Caco-2 (cell line): ENCODE measurements at regions of chr2 and their contacts with region 1.

Region 1: GRCh38 chr2:205424336-205424735 is 258.0 kb upstream of the NRP2 start:
- DNase-seq: peak; percentile 62 to 66
- H3K4me3 ChIP-seq: no peak overlapping the region
- H3K4me3 Mint-ChIP-seq: peak overlapping the region; percentile 25
- H3K27ac Mint-ChIP-seq: peak overlapping the region; percentile 84
- H3K4me1 ChIP-seq: peaks cover 35% of the 10 kb centered on the region
- H3K4me1 Mint-ChIP-seq: peaks cover 35% of the 10 kb centered on the region
- H3K27me3 ChIP-seq: no peaks in the 10 kb centered on the region
- H3K27me3 Mint-ChIP-seq: no peaks in the 10 kb centered on the region
- CTCF ChIP-seq: no peak

Region 2: GRCh38 chr2:205237524-205237923 is 186.8 kb before region 1 on chr2:
- CTCF ChIA-PET with region 1: no interaction called
- POLR2A ChIA-PET with region 1: no interaction called
- intact Hi-C with region 1: no loop called
- DNase-seq: no peak
- H3K4me3 ChIP-seq: no peak overlapping the region
- H3K4me3 Mint-ChIP-seq: no peak overlapping the region
- H3K27ac Mint-ChIP-seq: no peak overlapping the region
- H3K4me1 ChIP-seq: no peaks in the 10 kb centered on the region; the same call in 1 of the 2 replicates
- H3K4me1 Mint-ChIP-seq: peaks cover 12% of the 10 kb centered on the region
- H3K27me3 ChIP-seq: no peaks in the 10 kb centered on the region
- H3K27me3 Mint-ChIP-seq: no peaks in the 10 kb centered on the region
- CTCF ChIP-seq: peak in 1 of 2 experiments; percentile 25

Region 3: DNA sequence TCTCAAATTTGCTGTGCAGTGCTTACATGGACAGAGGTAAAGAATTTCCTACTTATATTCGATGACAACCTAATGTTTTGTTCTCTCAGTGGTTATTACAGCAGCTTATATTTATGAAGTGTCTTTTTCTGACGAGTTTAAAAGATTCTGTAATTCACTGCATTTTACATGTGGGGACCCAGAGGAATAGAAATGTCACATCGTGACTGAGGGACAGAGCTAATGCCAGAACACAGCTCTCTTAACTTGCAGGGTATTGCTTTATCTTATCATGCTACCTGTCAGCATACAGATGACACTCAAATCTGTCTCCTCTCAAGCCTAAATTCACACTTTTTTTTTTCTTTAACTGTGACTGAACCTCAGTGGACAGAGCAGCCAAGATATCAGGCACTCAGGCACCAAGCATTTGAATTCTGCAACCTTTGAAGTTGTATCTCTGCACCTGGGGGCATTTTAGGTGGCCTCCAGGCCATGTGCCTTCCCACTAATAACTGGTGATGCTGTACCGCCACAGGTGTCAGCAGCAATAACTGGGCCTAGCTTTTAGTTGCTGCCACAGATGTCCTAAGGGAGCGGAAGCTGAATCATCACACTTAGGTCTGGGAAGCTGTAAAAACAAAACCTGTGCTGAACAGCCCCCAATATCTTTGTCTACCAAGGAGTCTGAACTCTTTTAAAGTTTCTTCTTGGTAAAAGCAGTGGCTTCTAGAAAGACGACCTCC is 57.8 kb before region 1 on chr2:
- CTCF ChIA-PET with region 1: no interaction called
- POLR2A ChIA-PET with region 1: no interaction called
- intact Hi-C with region 1: loop called (anchors 2 kb)
- DNase-seq: peak; percentile 63 to 82
- H3K4me3 ChIP-seq: no peak overlapping the region
- H3K4me3 Mint-ChIP-seq: peak overlapping the region; percentile 36
- H3K27ac Mint-ChIP-seq: peak overlapping the region; percentile 71
- H3K4me1 ChIP-seq: peaks cover 36% of the 10 kb centered on the region
- H3K4me1 Mint-ChIP-seq: peaks cover 52% of the 10 kb centered on the region
- H3K27me3 ChIP-seq: no peaks in the 10 kb centered on the region
- H3K27me3 Mint-ChIP-seq: no peaks in the 10 kb centered on the region
- CTCF ChIP-seq: no peak

Region 4: DNA sequence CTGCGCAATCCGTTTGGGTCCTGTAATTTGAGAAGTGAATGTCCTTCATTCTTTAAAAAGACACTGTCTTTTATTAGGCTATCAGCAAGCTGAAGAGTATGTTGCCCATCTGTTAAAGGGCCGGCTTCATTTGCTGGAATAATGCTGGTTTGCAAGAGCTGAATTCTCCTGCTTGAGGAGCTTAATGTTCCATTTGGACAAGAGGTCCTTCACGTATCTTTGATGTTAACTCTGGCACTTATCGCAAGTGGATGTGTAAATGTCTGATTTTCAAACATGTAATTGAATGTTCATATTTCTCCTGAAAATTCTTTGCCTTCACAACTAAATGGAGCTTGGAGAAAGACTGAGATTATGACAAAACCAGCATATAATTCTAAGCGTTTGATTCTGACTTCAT is 22.8 kb before region 1 on chr2:
- CTCF ChIA-PET with region 1: no interaction called
- POLR2A ChIA-PET with region 1: no interaction called
- intact Hi-C with region 1: loop called (anchors 1 kb)
- DNase-seq: no peak
- H3K4me3 ChIP-seq: no peak overlapping the region
- H3K4me3 Mint-ChIP-seq: no peak overlapping the region
- H3K27ac Mint-ChIP-seq: no peak overlapping the region
- H3K4me1 ChIP-seq: peaks cover 21% of the 10 kb centered on the region
- H3K4me1 Mint-ChIP-seq: peaks cover 18% of the 10 kb centered on the region
- H3K27me3 ChIP-seq: no peaks in the 10 kb centered on the region
- H3K27me3 Mint-ChIP-seq: no peaks in the 10 kb centered on the region
- CTCF ChIP-seq: no peak

Region 5: DNA sequence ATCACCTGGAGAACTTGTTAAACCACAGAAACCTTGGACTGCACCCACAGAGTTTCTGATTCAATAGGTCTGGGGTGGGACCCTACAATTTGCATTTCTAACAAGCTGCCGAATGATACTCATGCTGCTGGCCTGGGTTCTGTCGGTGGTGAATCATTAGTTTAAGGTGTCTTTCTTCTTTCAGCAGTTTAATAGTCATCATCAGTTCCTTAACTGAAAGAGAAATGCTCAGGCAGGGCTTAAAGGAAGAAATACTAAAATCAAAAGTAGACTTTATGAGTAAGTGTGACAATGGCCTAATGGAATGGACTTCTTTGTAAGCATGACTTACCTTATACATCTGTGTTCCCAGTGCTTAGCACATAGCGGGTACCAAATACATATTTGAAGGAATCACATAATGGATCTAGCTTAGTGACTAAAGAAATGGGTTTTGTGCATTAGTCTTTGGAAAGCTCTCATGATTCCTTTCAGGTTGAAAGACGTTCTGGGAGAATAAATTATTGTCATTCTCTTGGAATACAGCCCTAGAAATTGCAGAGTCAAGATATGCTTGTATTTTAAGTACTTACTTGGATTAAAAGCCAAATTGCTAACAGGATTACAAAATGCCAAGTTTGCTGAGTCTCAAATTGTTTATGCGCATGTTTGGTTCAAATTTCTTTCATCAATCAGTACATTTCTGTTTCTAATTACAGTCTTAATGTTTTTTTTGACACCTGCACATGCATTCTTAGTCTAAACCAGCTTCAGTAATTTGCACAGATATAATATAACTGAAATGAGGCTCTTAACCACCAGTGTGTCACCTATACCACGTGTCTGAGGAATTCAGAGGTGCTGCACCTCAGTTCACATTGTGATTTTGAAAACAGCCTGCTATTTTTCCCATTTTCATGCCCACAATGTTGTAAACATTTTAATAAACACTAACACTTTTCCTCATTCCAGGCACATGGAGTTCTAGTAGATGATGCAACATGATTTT is 37.6 kb after region 1 on chr2:
- CTCF ChIA-PET with region 1: no interaction called
- POLR2A ChIA-PET with region 1: no interaction called
- intact Hi-C with region 1: no loop called
- DNase-seq: no peak
- H3K4me3 ChIP-seq: no peak overlapping the region
- H3K4me3 Mint-ChIP-seq: no peak overlapping the region
- H3K27ac Mint-ChIP-seq: no peak overlapping the region
- H3K4me1 ChIP-seq: no peaks in the 10 kb centered on the region
- H3K4me1 Mint-ChIP-seq: peaks cover 6% of the 10 kb centered on the region
- H3K27me3 ChIP-seq: no peaks in the 10 kb centered on the region
- H3K27me3 Mint-ChIP-seq: no peaks in the 10 kb centered on the region
- CTCF ChIP-seq: no peak

Region 6: GRCh38 chr2:205474741-205475415 is 50.5 kb after region 1 on chr2:
- CTCF ChIA-PET with region 1: no interaction called
- POLR2A ChIA-PET with region 1: no interaction called
- intact Hi-C with region 1: loop called (anchors 5 kb)
- DNase-seq: no peak
- H3K4me3 ChIP-seq: no peak overlapping the region
- H3K4me3 Mint-ChIP-seq: no peak overlapping the region
- H3K27ac Mint-ChIP-seq: no peak overlapping the region
- H3K4me1 ChIP-seq: peaks cover 21% of the 10 kb centered on the region
- H3K4me1 Mint-ChIP-seq: peaks cover 14% of the 10 kb centered on the region
- H3K27me3 ChIP-seq: no peaks in the 10 kb centered on the region
- H3K27me3 Mint-ChIP-seq: no peaks in the 10 kb centered on the region
- CTCF ChIP-seq: no peak

Region 7: DNA sequence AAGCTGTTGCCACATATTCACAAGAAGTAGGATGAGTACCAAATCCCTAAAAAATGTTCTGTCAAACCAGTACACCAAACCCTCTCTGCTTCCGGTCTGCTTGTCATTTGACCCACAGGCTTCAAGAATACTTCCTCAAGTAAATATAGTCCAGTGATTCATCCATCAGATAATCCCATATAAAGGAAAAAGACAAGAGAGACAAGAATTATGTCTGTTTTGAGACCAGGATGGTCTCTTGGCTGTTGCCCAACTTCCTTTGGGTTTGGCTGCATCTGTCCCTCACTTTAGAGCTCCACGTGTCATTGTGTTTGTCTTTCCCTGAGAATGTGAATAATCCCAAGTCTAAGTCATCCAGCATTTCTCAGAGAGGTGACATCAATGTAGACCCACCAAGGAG is 166.4 kb after region 1 on chr2:
- CTCF ChIA-PET with region 1: no interaction called
- POLR2A ChIA-PET with region 1: no interaction called
- intact Hi-C with region 1: no loop called
- DNase-seq: no peak
- H3K4me3 ChIP-seq: no peak overlapping the region
- H3K4me3 Mint-ChIP-seq: no peak overlapping the region
- H3K27ac Mint-ChIP-seq: no peak overlapping the region
- H3K4me1 ChIP-seq: no peaks in the 10 kb centered on the region
- H3K4me1 Mint-ChIP-seq: no peaks in the 10 kb centered on the region
- H3K27me3 ChIP-seq: no peaks in the 10 kb centered on the region
- H3K27me3 Mint-ChIP-seq: no peaks in the 10 kb centered on the region
- CTCF ChIP-seq: no peak